ENCODE measurements at regions of chr4 and their contacts with region 1.

Region 1: GRCh38 chr4:498328-498904 is 540 bp downstream of the ZNF721 start:
- DNase-seq: peak in 4 of 9 experiments; percentile 0 to 48 (median 40)
- ATAC-seq: peak; percentile 54
- H3K4me3 ChIP-seq: peak overlapping the region; percentile 85 to 90
- H3K4me3 Mint-ChIP-seq: peak overlapping the region; percentile 92
- H3K27ac ChIP-seq: peak overlapping the region; percentile 92 to 93
- H3K27ac Mint-ChIP-seq: peak overlapping the region; percentile 96
- H3K4me1 ChIP-seq: peaks cover 22% of the 10 kb centered on the region
- H3K4me1 Mint-ChIP-seq: peaks cover 42% of the 10 kb centered on the region
- H3K27me3 ChIP-seq: no peaks in the 10 kb centered on the region
- H3K27me3 Mint-ChIP-seq: no peaks in the 10 kb centered on the region
- CTCF ChIP-seq: no peak

Region 2: GRCh38 chr4:337143-337931 is 161.1 kb before region 1 on chr4 and contains the start of gene ZNF141:
- CTCF ChIA-PET with region 1: no interaction called
- POLR2A ChIA-PET with region 1: interaction called, 3 read pairs
- intact Hi-C with region 1: loop called (anchors 1 to 2 kb)
- DNase-seq: peak; percentile 84 to 97 (median 91)
- ATAC-seq: peak; percentile 88
- H3K4me3 ChIP-seq: peak within 1 kb of the TSS; percentile 94 to 95
- H3K4me3 Mint-ChIP-seq: peak within 1 kb of the TSS; percentile 99
- H3K27ac ChIP-seq: peak within 1 kb of the TSS; percentile 90 to 95
- H3K27ac Mint-ChIP-seq: peak within 1 kb of the TSS; percentile 99
- H3K4me1 ChIP-seq: peaks cover 17% of the 10 kb centered on the region
- H3K4me1 Mint-ChIP-seq: peaks cover 46% of the 10 kb centered on the region
- H3K27me3 ChIP-seq: no peaks in the 10 kb centered on the region
- H3K27me3 Mint-ChIP-seq: no peaks in the 10 kb centered on the region
- CTCF ChIP-seq: no peak
- total RNA-seq, gene ZNF141: 16.3 to 19.9 TPM

Region 3: GRCh38 chr4:896216-896615 is 397.8 kb after region 1 on chr4:
- CTCF ChIA-PET with region 1: no interaction called
- POLR2A ChIA-PET with region 1: no interaction called
- intact Hi-C with region 1: no loop called
- DNase-seq: peak in 1 of 9 experiments; percentile 3
- ATAC-seq: no peak
- H3K4me3 ChIP-seq: no peak overlapping the region
- H3K4me3 Mint-ChIP-seq: no peak overlapping the region
- H3K27ac ChIP-seq: no peak overlapping the region
- H3K27ac Mint-ChIP-seq: no peak overlapping the region
- H3K4me1 ChIP-seq: no peaks in the 10 kb centered on the region
- H3K4me1 Mint-ChIP-seq: no peaks in the 10 kb centered on the region
- H3K27me3 ChIP-seq: no peaks in the 10 kb centered on the region
- H3K27me3 Mint-ChIP-seq: no peaks in the 10 kb centered on the region
- CTCF ChIP-seq: no peak

Region 4: GRCh38 chr4:931960-932712 is 433.7 kb after region 1 on chr4 and contains the starts of genes GAK and TMEM175:
- CTCF ChIA-PET with region 1: no interaction called
- POLR2A ChIA-PET with region 1: no interaction called
- intact Hi-C with region 1: no loop called
- DNase-seq: peak; percentile 90 to 99 (median 96)
- ATAC-seq: peak; percentile 91
- H3K4me3 ChIP-seq: peak within 1 kb of the TSS; percentile 91 to 96
- H3K4me3 Mint-ChIP-seq: peak within 1 kb of the TSS; percentile 96
- H3K27ac ChIP-seq: peak within 1 kb of the TSS; percentile 91 to 92
- H3K27ac Mint-ChIP-seq: peak within 1 kb of the TSS; percentile 97
- H3K4me1 ChIP-seq: peaks cover 39% of the 10 kb centered on the region
- H3K4me1 Mint-ChIP-seq: peaks cover 51% of the 10 kb centered on the region
- H3K27me3 ChIP-seq: no peaks in the 10 kb centered on the region
- H3K27me3 Mint-ChIP-seq: no peaks in the 10 kb centered on the region
- CTCF ChIP-seq: no peak
- total RNA-seq, gene GAK: 161 to 162 TPM
- total RNA-seq, gene TMEM175: 44.9 to 47.2 TPM

Region 5: DNA sequence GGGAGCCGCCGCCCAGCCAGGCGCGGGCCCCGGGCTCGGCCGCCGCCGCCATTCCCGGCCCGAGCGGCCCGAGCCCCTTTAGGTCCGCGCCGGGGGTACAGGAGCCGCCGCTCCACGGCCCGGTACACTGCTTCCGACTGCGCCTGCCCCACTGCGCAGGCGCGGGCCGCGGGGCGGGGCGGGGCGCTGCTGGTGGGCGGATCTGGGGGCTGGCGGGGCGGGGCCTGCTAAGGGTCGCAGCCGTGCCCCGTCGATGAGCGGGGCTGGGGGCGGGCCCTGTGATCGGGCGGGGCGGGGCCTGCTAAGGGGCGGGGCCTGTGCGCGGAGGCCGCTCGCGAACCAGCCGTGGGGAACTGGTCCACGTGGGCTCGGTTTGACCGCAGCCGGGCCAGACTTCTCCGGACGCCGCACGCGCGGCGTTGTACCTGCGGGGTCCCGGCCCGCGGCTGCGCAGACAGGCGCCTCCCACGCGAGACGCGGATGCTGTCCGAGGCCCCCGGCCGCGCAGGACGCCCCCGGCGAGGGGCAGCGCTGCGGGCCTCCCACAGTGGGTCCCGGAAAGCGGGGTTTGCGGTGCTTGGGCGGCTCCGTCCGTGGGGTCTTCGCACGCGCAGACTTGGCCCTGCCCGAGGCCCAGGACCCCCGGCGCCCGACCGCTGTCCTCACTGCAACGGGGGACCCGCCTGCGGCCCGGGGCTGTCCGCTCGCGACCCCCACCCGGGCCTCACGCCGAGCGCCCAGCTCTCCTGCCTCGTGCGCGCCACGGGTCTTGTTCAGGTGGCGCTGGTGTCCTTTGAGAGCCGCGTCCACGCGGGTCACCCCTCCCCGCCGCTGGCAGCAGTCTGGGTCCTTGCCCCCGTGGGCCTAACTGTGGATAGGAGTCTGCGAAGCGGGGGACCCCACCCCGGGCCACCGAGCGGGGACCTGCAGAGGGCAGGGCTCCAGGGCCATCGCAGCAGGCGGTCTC is 475.3 kb after region 1 on chr4 and contains the start of gene DGKQ:
- CTCF ChIA-PET with region 1: no interaction called
- POLR2A ChIA-PET with region 1: no interaction called
- intact Hi-C with region 1: loop called in 1 of 2 experiments (anchors 5 kb)
- DNase-seq: peak; percentile 83 to 95 (median 89)
- ATAC-seq: peak; percentile 82
- H3K4me3 ChIP-seq: peak within 1 kb of the TSS; percentile 74 to 77
- H3K4me3 Mint-ChIP-seq: peak within 1 kb of the TSS; percentile 62
- H3K27ac ChIP-seq: peak within 1 kb of the TSS; percentile 56 to 85
- H3K27ac Mint-ChIP-seq: peak within 1 kb of the TSS; percentile 37
- H3K4me1 ChIP-seq: peaks cover 32% of the 10 kb centered on the region
- H3K4me1 Mint-ChIP-seq: peaks cover 17% of the 10 kb centered on the region
- H3K27me3 ChIP-seq: no peaks in the 10 kb centered on the region
- H3K27me3 Mint-ChIP-seq: no peaks in the 10 kb centered on the region
- CTCF ChIP-seq: no peak
- total RNA-seq, gene DGKQ: 28.2 to 29.7 TPM